Motor neuron (in vitro differentiated cells): ENCODE measurements at regions of chr15 and their contacts with region 1.

Region 1: GRCh38 chr15:82985688-82986441 is at the start of gene RAMAC:
- ATAC-seq: peak; percentile 96 to 99 (median 98)
- H3K4me3 ChIP-seq: peak within 1 kb of the TSS; percentile 67 to 82 (median 71)
- H3K27ac ChIP-seq: peak within 1 kb of the TSS; percentile 84 to 87
- H3K4me1 ChIP-seq: peaks cover 12% of the 10 kb centered on the region in 2 donors
- total RNA-seq, gene RAMAC: 20.8 to 45.3 (median 39.4) TPM

Region 2: GRCh38 chr15:82585072-82585471 is 400.8 kb before region 1 on chr15:
- in situ Hi-C with region 1: loop called in 1 of 9 experiments (anchors 25 kb)
- ATAC-seq: peak in 5 of 8 experiments; percentile 26 to 89 (median 43)
- H3K4me3 ChIP-seq: no peak overlapping the region
- H3K27ac ChIP-seq: no peak overlapping the region
- H3K4me1 ChIP-seq: no peaks in the 10 kb centered on the region

Region 3: GRCh38 chr15:83129791-83130190 is 143.9 kb after region 1 on chr15:
- in situ Hi-C with region 1: no loop called
- ATAC-seq: no peak
- H3K4me3 ChIP-seq: no peak overlapping the region
- H3K27ac ChIP-seq: no peak overlapping the region
- H3K4me1 ChIP-seq: no peaks in the 10 kb centered on the region

Region 4: DNA sequence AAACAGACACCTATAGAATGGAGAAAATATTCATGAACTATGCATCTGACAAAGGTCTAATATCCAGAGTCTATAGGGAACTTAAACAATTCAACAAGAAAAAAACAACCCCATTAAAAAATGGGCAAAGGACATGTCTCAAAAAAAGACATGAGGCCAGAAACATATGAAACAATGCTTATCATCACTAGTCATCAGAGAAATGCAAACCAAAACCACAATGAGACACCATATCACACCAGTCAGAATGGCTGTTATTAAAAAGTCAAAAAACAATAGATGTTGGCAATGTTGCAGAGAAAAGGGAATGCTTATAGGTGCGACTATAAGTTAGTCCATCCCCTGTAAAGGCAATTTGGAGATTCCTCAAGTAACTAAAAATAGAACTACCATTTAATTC is 233.2 kb after region 1 on chr15:
- in situ Hi-C with region 1: no loop called
- ATAC-seq: no peak
- H3K4me3 ChIP-seq: no peak overlapping the region
- H3K27ac ChIP-seq: no peak overlapping the region
- H3K4me1 ChIP-seq: no peaks in the 10 kb centered on the region